ENCODE measurements at regions of chr2 and their contacts with region 1.

Region 1: DNA sequence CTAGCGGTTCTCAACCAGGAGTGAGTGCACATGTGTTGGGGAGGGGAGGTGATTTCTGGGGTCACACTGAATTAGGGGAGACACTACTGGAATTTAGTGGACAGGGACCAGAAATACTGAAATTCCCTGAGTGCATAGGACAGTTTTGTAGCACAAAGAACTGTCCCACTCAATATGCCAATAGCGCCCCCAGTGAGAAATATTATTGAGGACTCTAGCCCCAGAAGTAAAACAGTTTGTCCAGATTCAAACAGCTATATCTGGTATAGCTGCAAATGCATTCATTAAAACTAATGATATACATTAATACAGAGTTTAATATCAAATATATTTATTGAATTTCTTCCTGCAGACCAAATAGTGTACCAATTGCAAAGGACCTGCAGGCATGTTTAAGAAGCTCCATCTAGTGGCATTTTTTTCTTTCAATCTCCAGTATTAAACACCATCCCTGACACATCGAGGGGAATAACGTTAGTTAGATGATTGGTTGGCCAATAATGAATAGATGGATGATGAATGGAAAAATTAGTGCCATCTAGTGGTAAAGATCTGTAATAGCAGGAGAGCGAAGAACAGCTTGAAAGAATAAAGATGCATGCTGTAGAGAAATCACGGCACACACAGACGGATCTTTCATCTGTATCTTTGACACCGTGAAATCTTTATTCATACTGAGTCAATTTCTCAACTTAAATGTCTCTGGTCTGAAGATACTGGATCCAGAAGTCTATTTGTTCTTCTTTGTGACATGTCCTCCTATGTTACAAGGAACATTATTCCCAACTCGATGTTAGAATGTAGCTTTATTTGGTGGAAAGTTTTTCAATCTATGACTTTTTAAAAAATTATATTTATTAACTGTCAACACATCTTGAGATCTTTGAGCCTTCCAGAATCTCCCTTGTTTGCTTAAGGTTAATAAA is 62.5 kb downstream of the DHRS9 start:
- DNase-seq: peak; percentile 77
- H3K4me3 ChIP-seq: no peak overlapping the region
- H3K27ac ChIP-seq: no peak overlapping the region
- H3K4me1 ChIP-seq: no peaks in the 10 kb centered on the region
- H3K27me3 ChIP-seq: no peaks in the 10 kb centered on the region
- CTCF ChIP-seq: peak; percentile 58
- POLR2A ChIP-seq: no peak

Region 2: DNA sequence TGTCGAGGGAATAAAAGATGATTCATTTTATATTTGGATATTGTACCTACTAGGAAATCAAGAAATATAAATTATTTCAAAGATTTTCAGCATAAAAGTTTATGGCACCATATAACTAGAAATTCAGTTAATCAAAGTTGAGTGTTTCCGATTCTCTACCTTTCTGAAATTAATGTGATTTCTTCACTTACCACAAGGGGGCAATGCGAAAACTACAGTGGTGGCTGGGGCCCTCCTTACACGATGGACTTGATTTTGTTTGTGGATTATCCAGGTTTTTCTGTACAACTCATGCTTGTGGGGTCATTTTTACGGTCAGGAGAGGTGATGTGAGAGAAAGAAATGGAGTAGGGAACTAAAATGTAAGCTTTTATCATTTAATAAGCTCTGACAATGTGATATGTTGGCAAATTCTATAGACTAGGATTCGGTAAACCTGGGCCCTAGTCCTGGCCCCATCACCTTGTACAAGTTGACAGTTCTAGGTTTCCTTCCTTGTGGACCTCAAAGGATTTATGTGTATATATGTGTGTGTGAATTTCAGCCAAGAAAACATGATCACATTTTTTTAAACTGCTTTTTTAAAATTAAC is 183.1 kb before region 1 on chr2:
- CTCF ChIA-PET with region 1: interaction called, 41 read pairs
- POLR2A ChIA-PET with region 1: no interaction called
- dilution Hi-C with region 1: no loop called
- intact Hi-C with region 1: loop called (anchors 1 kb)
- DNase-seq: peak; percentile 31
- H3K4me3 ChIP-seq: no peak overlapping the region
- H3K27ac ChIP-seq: no peak overlapping the region
- H3K4me1 ChIP-seq: no peaks in the 10 kb centered on the region
- H3K27me3 ChIP-seq: no peaks in the 10 kb centered on the region
- CTCF ChIP-seq: peak; percentile 55 to 58
- POLR2A ChIP-seq: no peak

Region 3: GRCh38 chr2:168961450-168962229 is 170.2 kb before region 1 on chr2:
- CTCF ChIA-PET with region 1: interaction called, 41 read pairs
- POLR2A ChIA-PET with region 1: no interaction called
- dilution Hi-C with region 1: no loop called
- intact Hi-C with region 1: loop called (anchors 1 kb)
- DNase-seq: peak; percentile 89
- H3K4me3 ChIP-seq: no peak overlapping the region
- H3K27ac ChIP-seq: no peak overlapping the region
- H3K4me1 ChIP-seq: peaks cover 5% of the 10 kb centered on the region
- H3K27me3 ChIP-seq: no peaks in the 10 kb centered on the region
- CTCF ChIP-seq: peak; percentile 63 to 68
- POLR2A ChIP-seq: no peak

Region 4: GRCh38 chr2:168971261-168971660 is 160.6 kb before region 1 on chr2:
- CTCF ChIA-PET with region 1: interaction called, 41 read pairs
- POLR2A ChIA-PET with region 1: no interaction called
- dilution Hi-C with region 1: no loop called
- intact Hi-C with region 1: no loop called
- DNase-seq: no peak
- H3K4me3 ChIP-seq: no peak overlapping the region
- H3K27ac ChIP-seq: no peak overlapping the region
- H3K4me1 ChIP-seq: no peaks in the 10 kb centered on the region
- H3K27me3 ChIP-seq: no peaks in the 10 kb centered on the region
- CTCF ChIP-seq: no peak
- POLR2A ChIP-seq: no peak

Region 5: DNA sequence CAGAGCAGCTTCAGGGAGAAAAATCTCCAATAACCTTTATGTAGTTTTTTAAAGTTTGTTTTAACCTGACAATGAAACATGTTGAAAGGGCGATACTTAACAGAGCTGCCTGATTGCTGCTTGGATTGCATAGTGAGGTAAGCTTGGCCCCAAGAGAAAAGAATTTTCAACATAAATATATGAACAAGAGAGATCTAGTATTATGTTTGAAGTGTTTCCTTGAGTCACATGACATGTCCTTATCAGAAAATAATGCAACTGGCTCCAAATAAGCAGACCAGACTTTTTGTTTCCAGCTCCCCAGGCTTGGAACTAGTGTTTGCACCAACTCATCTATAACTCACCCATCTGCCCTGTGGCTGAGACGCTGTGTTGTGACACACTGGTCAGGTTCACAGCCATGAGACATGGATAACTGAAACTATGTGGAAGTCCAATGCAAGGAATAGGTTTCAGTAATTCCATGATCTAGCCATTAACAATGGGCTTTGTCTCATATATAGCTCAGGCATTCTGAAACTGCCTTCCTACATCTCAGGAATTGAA is 145.4 kb before region 1 on chr2:
- CTCF ChIA-PET with region 1: interaction called, 18 read pairs
- POLR2A ChIA-PET with region 1: no interaction called
- dilution Hi-C with region 1: no loop called
- intact Hi-C with region 1: no loop called
- DNase-seq: no peak
- H3K4me3 ChIP-seq: no peak overlapping the region
- H3K27ac ChIP-seq: no peak overlapping the region
- H3K4me1 ChIP-seq: peaks cover 2% of the 10 kb centered on the region
- H3K27me3 ChIP-seq: no peaks in the 10 kb centered on the region
- CTCF ChIP-seq: no peak
- POLR2A ChIP-seq: no peak

Region 6: GRCh38 chr2:168992591-168993349 is 139.1 kb before region 1 on chr2:
- CTCF ChIA-PET with region 1: interaction called, 11 read pairs
- POLR2A ChIA-PET with region 1: no interaction called
- dilution Hi-C with region 1: no loop called
- intact Hi-C with region 1: no loop called
- DNase-seq: peak; percentile 73
- H3K4me3 ChIP-seq: no peak overlapping the region
- H3K27ac ChIP-seq: peak overlapping the region; percentile 90
- H3K4me1 ChIP-seq: peaks cover 63% of the 10 kb centered on the region
- H3K27me3 ChIP-seq: no peaks in the 10 kb centered on the region
- CTCF ChIP-seq: no peak
- POLR2A ChIP-seq: no peak

Region 7: GRCh38 chr2:169119126-169119770 is 12.6 kb before region 1 on chr2:
- CTCF ChIA-PET with region 1: interaction called, 217 read pairs
- POLR2A ChIA-PET with region 1: no interaction called
- dilution Hi-C with region 1: no loop called
- intact Hi-C with region 1: no loop called
- DNase-seq: no peak
- H3K4me3 ChIP-seq: no peak overlapping the region
- H3K27ac ChIP-seq: no peak overlapping the region
- H3K4me1 ChIP-seq: no peaks in the 10 kb centered on the region
- H3K27me3 ChIP-seq: no peaks in the 10 kb centered on the region
- CTCF ChIP-seq: no peak
- POLR2A ChIP-seq: no peak

Region 8: DNA sequence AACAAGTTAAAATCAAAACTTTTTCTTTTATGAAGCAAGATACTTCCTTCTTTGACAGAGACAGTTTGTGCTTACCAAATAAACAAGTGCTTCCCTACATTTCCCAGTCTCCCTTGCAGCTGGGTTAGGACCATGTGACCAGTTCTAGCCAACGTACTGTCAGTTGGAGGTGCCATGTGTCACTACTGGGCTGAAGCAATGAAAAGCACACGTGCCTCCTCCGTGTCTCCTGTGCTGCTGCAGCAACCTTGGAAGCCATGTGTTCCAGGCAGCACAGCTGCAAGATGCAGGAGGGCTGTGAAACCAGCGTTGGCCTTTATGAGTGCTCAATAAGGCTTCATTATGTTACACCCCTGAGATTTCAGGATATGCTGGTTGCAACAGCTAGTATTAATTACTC is 30.8 kb after region 1 on chr2:
- CTCF ChIA-PET with region 1: no interaction called
- POLR2A ChIA-PET with region 1: no interaction called
- dilution Hi-C with region 1: no loop called
- intact Hi-C with region 1: no loop called
- DNase-seq: no peak
- H3K4me3 ChIP-seq: no peak overlapping the region
- H3K27ac ChIP-seq: no peak overlapping the region
- H3K4me1 ChIP-seq: no peaks in the 10 kb centered on the region
- H3K27me3 ChIP-seq: peaks cover 8 to 16% of the 10 kb centered on the region in 2 experiments
- CTCF ChIP-seq: no peak
- POLR2A ChIP-seq: no peak

Region 9: DNA sequence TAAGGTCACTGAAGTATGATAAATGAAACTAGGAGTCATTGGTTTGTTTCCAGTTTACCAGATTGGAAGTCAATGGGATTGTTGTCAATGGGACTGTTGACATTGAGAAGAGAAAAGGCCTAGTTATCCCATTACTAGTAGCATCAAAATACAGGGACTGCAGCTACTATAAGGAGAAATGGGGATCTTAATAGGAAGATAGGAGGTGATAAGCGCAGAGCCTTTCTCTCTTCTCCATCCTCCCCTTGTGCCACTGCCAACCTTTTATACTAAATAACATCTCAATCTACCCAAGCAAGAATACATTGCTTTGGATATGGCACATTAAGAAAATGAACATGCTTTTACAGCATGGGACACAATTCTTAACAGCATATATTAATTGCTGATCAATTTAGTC is 337.0 kb after region 1 on chr2:
- CTCF ChIA-PET with region 1: no interaction called
- POLR2A ChIA-PET with region 1: no interaction called
- dilution Hi-C with region 1: no loop called
- intact Hi-C with region 1: no loop called
- DNase-seq: no peak
- H3K4me3 ChIP-seq: no peak overlapping the region
- H3K27ac ChIP-seq: no peak overlapping the region
- H3K4me1 ChIP-seq: no peaks in the 10 kb centered on the region
- H3K27me3 ChIP-seq: no peaks in the 10 kb centered on the region
- CTCF ChIP-seq: no peak
- POLR2A ChIP-seq: no peak

Measured in endothelial cell of umbilical vein (primary cell).